ENCODE measurements at regions of chr2 and their contacts with region 1.

Region 1: GRCh38 chr2:40202798-40203400 is 249.0 kb downstream of the SLC8A1 start:
- DNase-seq: peak; percentile 72
- H3K4me3 ChIP-seq: no peak overlapping the region
- H3K27me3 ChIP-seq: no peaks in the 10 kb centered on the region
- CTCF ChIP-seq: no peak

Region 2: GRCh38 chr2:40138314-40138713 is 64.6 kb before region 1 on chr2:
- CTCF ChIA-PET with region 1: no interaction called
- POLR2A ChIA-PET with region 1: no interaction called
- DNase-seq: no peak
- H3K4me3 ChIP-seq: no peak overlapping the region
- H3K27me3 ChIP-seq: no peaks in the 10 kb centered on the region
- CTCF ChIP-seq: no peak

Region 3: GRCh38 chr2:40212804-40213470 is 10.0 kb after region 1 on chr2:
- CTCF ChIA-PET with region 1: interaction called, 14 read pairs
- POLR2A ChIA-PET with region 1: no interaction called
- DNase-seq: no peak
- H3K4me3 ChIP-seq: no peak overlapping the region
- H3K27me3 ChIP-seq: no peaks in the 10 kb centered on the region
- CTCF ChIP-seq: peak; percentile 60

Region 4: DNA sequence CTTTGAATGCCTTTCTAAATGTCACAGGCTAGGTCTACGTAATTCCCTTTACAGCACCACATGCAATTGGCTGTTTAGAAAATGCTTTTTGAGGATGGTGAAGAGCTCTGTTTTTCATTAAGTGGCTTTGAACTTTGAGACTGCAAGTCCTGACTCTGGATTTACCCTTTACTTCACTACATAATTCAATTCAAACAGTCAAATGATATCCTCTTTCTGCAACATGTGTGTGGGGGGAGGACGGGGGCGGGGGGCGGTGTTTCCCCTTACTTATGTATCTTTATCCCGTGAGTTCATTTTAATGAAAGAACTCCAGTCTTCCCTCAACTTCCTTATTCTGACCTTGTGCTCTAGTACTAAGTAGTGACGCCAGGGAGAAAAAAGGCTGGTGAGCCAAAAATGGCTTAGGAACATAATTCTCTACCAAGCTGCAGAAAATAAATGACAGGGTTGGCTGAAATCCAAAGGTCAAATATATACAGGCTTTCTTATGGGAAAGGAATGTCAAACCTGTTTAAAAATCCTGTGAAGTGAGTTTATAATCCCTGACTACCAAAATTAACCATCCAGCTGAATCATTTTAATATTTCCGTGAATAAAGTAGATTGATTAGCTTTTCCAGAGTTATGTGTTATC is 129.4 kb after region 1 on chr2:
- CTCF ChIA-PET with region 1: no interaction called
- POLR2A ChIA-PET with region 1: interaction called, 15 read pairs
- DNase-seq: no peak
- H3K4me3 ChIP-seq: no peak overlapping the region
- H3K27me3 ChIP-seq: no peaks in the 10 kb centered on the region
- CTCF ChIP-seq: no peak

Measured in BJ (cell line).